Right ventricle myocardium inferior (tissue), 1 donor: ENCODE measurements at regions of chr1 and their contacts with region 1.

Region 1: GRCh38 chr1:33575324-33575879 is 103.0 kb downstream of the ZSCAN20 start:
- DNase-seq: no peak
- ATAC-seq: peak; percentile 88

Region 2: GRCh38 chr1:33466159-33466558 is 109.2 kb before region 1 on chr1:
- intact Hi-C with region 1: no loop called
- DNase-seq: no peak
- ATAC-seq: peak; percentile 33

Region 3: GRCh38 chr1:33515112-33515511 is 60.3 kb before region 1 on chr1:
- intact Hi-C with region 1: loop called (anchors 2 kb)
- DNase-seq: no peak
- ATAC-seq: no peak